Lower leg skin (tissue), 4 donors: ENCODE measurements at regions of chr12 and their contacts with region 1.

Region 1: DNA sequence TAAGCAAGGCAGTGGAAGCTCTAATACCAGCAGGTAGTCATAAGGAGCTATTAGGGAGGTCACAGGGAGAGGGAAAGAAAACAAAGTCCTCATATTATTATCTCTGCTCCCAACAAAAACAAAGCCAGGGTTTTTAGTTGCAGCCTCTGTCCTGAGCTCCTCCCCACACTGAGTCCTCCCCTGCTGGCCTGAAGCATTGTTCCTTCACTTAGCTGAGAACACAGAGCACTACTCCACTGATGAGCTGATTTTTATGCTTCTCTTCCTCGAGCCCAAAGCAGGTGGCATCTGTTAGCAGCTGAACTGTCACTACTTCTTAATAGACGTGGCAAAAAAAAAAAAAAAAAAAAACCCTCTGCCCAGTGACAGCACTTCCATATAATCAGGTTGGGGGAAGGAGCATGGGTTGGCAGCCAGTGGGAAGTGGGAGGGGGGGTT is 10.5 kb upstream of the STAC3 start:
- DNase-seq: no peak
- H3K4me3 ChIP-seq: no peak overlapping the region
- CTCF ChIP-seq: no peak
- POLR2A ChIP-seq: no peak

Region 2: GRCh38 chr12:57213058-57213715 is 48.3 kb before region 1 on chr12:
- intact Hi-C with region 1: no loop called
- DNase-seq: peak; percentile 88 to 98
- H3K4me3 ChIP-seq: no peak overlapping the region
- CTCF ChIP-seq: peak in 1 of 3 donors; percentile 57
- POLR2A ChIP-seq: no peak

Region 3: GRCh38 chr12:57355734-57356133 is 94.3 kb after region 1 on chr12:
- intact Hi-C with region 1: no loop called
- DNase-seq: no peak
- H3K4me3 ChIP-seq: no peak overlapping the region
- CTCF ChIP-seq: no peak
- POLR2A ChIP-seq: no peak

Region 4: DNA sequence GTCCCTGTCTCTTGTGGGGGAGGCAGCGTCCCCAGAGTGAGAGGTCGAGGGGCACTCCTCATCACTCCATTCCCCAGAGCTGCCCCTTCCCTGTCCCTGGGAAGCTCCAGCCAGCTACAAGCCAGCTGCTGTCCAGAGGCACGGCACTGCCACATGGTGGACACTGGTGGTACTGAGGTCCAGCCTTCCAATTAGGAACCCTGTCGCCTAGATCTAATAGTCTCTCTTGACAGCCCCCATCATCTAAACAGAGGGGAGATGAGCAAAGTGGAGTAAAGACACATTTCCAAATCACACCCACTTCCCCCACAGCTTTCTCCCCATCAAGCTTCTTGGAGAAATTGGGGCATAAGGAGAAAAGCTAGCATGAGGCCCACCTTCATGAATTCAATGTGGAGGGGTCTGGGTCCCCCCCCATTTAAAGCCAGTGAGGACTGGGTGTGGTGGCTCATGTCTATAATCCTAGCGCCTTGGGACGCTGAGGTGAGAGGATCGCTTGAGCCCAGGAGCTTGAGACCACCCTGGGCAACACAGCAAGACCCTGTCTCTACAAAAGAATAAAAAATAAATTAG is 191.6 kb after region 1 on chr12:
- intact Hi-C with region 1: loop called (anchors 5 kb)
- DNase-seq: peak; percentile 55 to 92
- H3K4me3 ChIP-seq: no peak overlapping the region
- CTCF ChIP-seq: no peak
- POLR2A ChIP-seq: no peak